Heart left ventricle (tissue), 16 donors: ENCODE measurements at regions of chr1 and their contacts with region 1.

Region 1: DNA sequence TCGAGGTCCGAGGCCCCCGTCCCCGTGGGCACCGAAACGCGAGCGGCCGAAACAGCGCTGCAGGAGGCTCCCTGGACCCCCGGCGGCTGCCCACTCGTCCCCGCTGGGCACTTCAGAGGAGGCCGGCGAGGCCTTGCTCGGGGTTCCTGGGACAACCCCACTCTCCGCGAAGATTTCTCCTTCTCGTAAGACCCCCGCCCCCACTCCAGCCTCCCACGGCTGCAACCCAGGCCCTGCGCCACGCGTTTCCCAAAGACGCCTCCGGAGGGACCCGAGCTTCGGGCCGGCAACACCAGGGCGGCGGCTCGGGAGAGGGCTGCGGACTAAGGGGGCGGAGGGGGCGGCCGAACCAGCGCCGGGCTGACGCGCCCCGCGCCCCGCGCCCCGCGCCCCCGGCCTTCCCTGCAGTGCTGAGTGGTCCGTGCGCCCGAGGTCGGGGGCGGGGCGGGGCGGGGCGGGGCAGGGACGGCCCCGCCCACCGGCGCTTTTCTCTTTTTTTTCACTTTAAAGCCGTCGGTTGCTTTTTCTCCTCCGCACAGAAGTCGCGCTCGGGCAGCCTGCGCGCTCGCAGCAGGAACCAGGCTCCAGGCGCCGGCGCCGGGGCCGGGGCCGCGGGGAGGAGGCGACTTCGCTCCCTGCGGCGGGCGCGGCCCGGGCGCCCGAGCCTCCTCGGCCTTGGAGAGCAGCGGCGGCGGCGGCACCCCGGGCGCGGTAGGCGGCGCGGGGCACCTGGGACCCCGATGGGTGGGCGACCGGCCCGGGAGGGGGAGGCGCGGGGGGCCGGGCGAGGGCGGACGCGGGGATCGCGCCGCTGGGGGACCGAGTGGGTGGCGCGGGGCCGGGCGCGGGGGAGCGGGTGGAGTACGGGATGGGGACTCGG is at the start of gene SPSB1:
- DNase-seq: peak; percentile 76 to 82 (median 79)
- ATAC-seq: peak; percentile 15 to 61 (median 53)
- H3K4me3 ChIP-seq: peak within 1 kb of the TSS; percentile 60 to 100 (median 91)
- H3K27ac ChIP-seq: peak within 1 kb of the TSS; percentile 73 to 93 (median 84)
- H3K4me1 ChIP-seq: peaks cover 0 to 52% (median 31%) of the 10 kb centered on the region in 12 donors
- H3K27me3 ChIP-seq: no peaks in the 10 kb centered on the region
- CTCF ChIP-seq: peak in 1 of 12 donors; percentile 9
- POLR2A ChIP-seq: peak; percentile 60 to 89
- total RNA-seq, gene SPSB1: 7.7 to 27.2 (median 9.2) TPM

Region 2: GRCh38 chr1:9166289-9167235 is 126.0 kb before region 1 on chr1:
- intact Hi-C with region 1: no loop called
- DNase-seq: peak in 2 of 5 donors; percentile 19 to 37
- ATAC-seq: no peak
- H3K4me3 ChIP-seq: no peak overlapping the region
- H3K27ac ChIP-seq: peak overlapping the region in 2 of 12 donors; percentile 5 to 14
- H3K4me1 ChIP-seq: peaks cover 0 to 40% (median 29%) of the 10 kb centered on the region in 12 donors
- H3K27me3 ChIP-seq: no peaks in the 10 kb centered on the region
- CTCF ChIP-seq: no peak
- POLR2A ChIP-seq: no peak

Region 3: DNA sequence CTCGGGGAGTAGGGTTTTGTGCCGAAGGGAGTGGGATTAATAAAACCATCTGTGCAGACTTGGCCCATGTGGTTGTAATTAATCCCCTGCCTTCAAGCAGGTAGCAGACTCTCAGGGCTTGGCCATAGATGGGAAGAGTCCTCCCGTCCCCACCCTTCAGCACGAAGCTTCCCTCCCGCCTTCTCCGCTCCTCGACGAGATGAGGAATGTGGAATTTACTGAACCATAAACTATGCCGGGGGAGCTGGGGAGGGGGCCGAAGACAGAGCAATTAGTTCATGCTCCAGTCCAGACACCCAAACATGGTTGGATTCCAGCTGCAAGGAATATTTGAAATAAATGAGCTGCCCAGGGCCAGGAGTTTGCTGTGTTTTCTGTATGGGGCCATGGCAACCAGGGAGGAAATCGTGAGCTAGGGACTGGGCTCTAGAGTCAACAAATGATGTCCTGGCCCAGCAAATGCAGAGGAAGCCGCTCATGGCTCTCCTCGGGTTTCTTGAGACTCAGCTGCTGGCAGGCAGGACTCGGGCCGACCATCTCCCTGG is 78.9 kb after region 1 on chr1:
- intact Hi-C with region 1: loop called in 2 of 10 experiments (anchors 5 kb)
- DNase-seq: peak in 4 of 5 donors; percentile 54 to 75 (median 66)
- ATAC-seq: peak; percentile 58 to 83 (median 66)
- H3K4me3 ChIP-seq: no peak overlapping the region
- H3K27ac ChIP-seq: peak overlapping the region in 6 of 12 donors; percentile 18 to 77 (median 51)
- H3K4me1 ChIP-seq: peaks cover 0 to 40% (median 16%) of the 10 kb centered on the region in 12 donors
- H3K27me3 ChIP-seq: no peaks in the 10 kb centered on the region
- CTCF ChIP-seq: no peak
- POLR2A ChIP-seq: no peak

Region 4: GRCh38 chr1:9388335-9389180 is 96.0 kb after region 1 on chr1:
- intact Hi-C with region 1: loop called in 2 of 10 experiments (anchors 5 kb)
- DNase-seq: no peak
- ATAC-seq: peak in 1 of 4 donors; percentile 25
- H3K4me3 ChIP-seq: no peak overlapping the region
- H3K27ac ChIP-seq: peak overlapping the region in 1 of 12 donors; percentile 11
- H3K4me1 ChIP-seq: peaks cover 0 to 32% (median 19%) of the 10 kb centered on the region in 12 donors
- H3K27me3 ChIP-seq: no peaks in the 10 kb centered on the region
- CTCF ChIP-seq: no peak
- POLR2A ChIP-seq: no peak

Region 5: GRCh38 chr1:9449106-9449627 is 156.6 kb after region 1 on chr1:
- intact Hi-C with region 1: loop called in 6 of 10 experiments (anchors 2 to 10 kb)
- DNase-seq: peak in 4 of 5 donors; percentile 39 to 65 (median 52)
- ATAC-seq: peak; percentile 87 to 92 (median 90)
- H3K4me3 ChIP-seq: peak overlapping the region in 3 of 12 donors; percentile 3 to 10 (median 7)
- H3K27ac ChIP-seq: peak overlapping the region in 9 of 12 donors; percentile 13 to 71 (median 49)
- H3K4me1 ChIP-seq: peaks cover 0 to 26% (median 18%) of the 10 kb centered on the region in 12 donors
- H3K27me3 ChIP-seq: peaks cover 0 to 5% (median 0%) of the 10 kb centered on the region in 9 donors
- CTCF ChIP-seq: no peak
- POLR2A ChIP-seq: no peak

Region 6: GRCh38 chr1:9486466-9487140 is 194.0 kb after region 1 on chr1:
- intact Hi-C with region 1: loop called in 9 of 10 experiments (anchors 1 to 5 kb)
- DNase-seq: no peak
- ATAC-seq: no peak
- H3K4me3 ChIP-seq: no peak overlapping the region
- H3K27ac ChIP-seq: peak overlapping the region in 2 of 12 donors; percentile 4 to 50
- H3K4me1 ChIP-seq: peaks cover 0 to 3% (median 0%) of the 10 kb centered on the region in 12 donors
- H3K27me3 ChIP-seq: no peaks in the 10 kb centered on the region
- CTCF ChIP-seq: no peak
- POLR2A ChIP-seq: no peak

Region 7: GRCh38 chr1:9573723-9574122 is 281.1 kb after region 1 on chr1:
- intact Hi-C with region 1: loop called in 1 of 10 experiments (anchors 10 kb)
- DNase-seq: no peak
- ATAC-seq: peak in 3 of 4 donors; percentile 61 to 75 (median 64)
- H3K4me3 ChIP-seq: no peak overlapping the region
- H3K27ac ChIP-seq: no peak overlapping the region
- H3K4me1 ChIP-seq: peaks cover 0 to 4% (median 0%) of the 10 kb centered on the region in 12 donors
- H3K27me3 ChIP-seq: no peaks in the 10 kb centered on the region
- CTCF ChIP-seq: peak; percentile 9 to 58 (median 46)
- POLR2A ChIP-seq: no peak